PC-3 (cell line): ENCODE measurements at regions of chrX and their contacts with region 1.

Region 1: GRCh38 chrX:108070891-108071290 is 20.5 kb downstream of the PSMD10 start:
- DNase-seq: peak; percentile 91
- ATAC-seq: peak; percentile 98
- H3K4me3 ChIP-seq: no peak overlapping the region
- H3K27ac ChIP-seq: peak overlapping the region; percentile 52
- H3K4me1 ChIP-seq: peaks cover 31% of the 10 kb centered on the region
- H3K27me3 ChIP-seq: no peaks in the 10 kb centered on the region
- CTCF ChIP-seq: no peak

Region 2: GRCh38 chrX:107654872-107655761 is 415.8 kb before region 1 on chrX:
- CTCF ChIA-PET with region 1: no interaction called
- POLR2A ChIA-PET with region 1: no interaction called
- intact Hi-C with region 1: loop called (anchors 5 kb)
- DNase-seq: peak; percentile 86
- ATAC-seq: peak; percentile 84
- H3K4me3 ChIP-seq: peak overlapping the region; percentile 34
- H3K27ac ChIP-seq: peak overlapping the region; percentile 89
- H3K4me1 ChIP-seq: peaks cover 19% of the 10 kb centered on the region
- H3K27me3 ChIP-seq: no peaks in the 10 kb centered on the region
- CTCF ChIP-seq: peak; percentile 88

Region 3: GRCh38 chrX:107716816-107717700 is 353.8 kb before region 1 on chrX:
- CTCF ChIA-PET with region 1: no interaction called
- POLR2A ChIA-PET with region 1: no interaction called
- intact Hi-C with region 1: loop called (anchors 5 kb)
- DNase-seq: peak; percentile 69
- ATAC-seq: peak; percentile 64
- H3K4me3 ChIP-seq: peak overlapping the region; percentile 92
- H3K27ac ChIP-seq: peak overlapping the region; percentile 25; the same call in 1 of the 2 replicates
- H3K4me1 ChIP-seq: peaks cover 19% of the 10 kb centered on the region
- H3K27me3 ChIP-seq: no peaks in the 10 kb centered on the region
- CTCF ChIP-seq: no peak

Region 4: DNA sequence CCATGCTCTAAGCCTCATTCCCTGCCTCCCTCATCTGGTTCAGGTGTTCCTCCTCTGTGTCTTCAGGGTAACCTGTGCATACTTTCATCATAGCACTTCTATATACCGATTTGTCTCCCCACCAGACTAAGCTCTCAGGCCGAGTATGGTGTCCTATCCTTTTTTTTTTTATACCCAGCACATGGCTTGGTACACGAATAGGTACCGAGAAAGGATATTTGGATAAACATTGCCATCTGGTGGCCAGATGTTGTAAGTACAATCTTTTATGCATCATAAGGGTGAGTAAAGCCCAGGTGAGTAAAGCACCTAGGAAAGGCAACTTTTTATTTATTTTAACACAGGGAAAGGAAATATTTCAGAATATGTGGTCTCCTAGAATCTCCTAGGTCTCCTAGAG is 176.9 kb before region 1 on chrX:
- CTCF ChIA-PET with region 1: no interaction called
- POLR2A ChIA-PET with region 1: no interaction called
- intact Hi-C with region 1: loop called (anchors 5 kb)
- DNase-seq: peak; percentile 77
- ATAC-seq: peak; percentile 77
- H3K4me3 ChIP-seq: no peak overlapping the region
- H3K27ac ChIP-seq: no peak overlapping the region
- H3K4me1 ChIP-seq: no peaks in the 10 kb centered on the region
- H3K27me3 ChIP-seq: no peaks in the 10 kb centered on the region
- CTCF ChIP-seq: peak; percentile 76

Region 5: GRCh38 chrX:108020631-108021030 is 50.3 kb before region 1 on chrX:
- CTCF ChIA-PET with region 1: interaction called, 5 read pairs
- POLR2A ChIA-PET with region 1: no interaction called
- intact Hi-C with region 1: loop called (anchors 1 kb)
- DNase-seq: peak; percentile 54
- ATAC-seq: no peak
- H3K4me3 ChIP-seq: no peak overlapping the region
- H3K27ac ChIP-seq: peak overlapping the region; percentile 22; the same call in 1 of the 2 replicates
- H3K4me1 ChIP-seq: peaks cover 56% of the 10 kb centered on the region
- H3K27me3 ChIP-seq: no peaks in the 10 kb centered on the region
- CTCF ChIP-seq: peak; percentile 78

Region 6: GRCh38 chrX:108138814-108139702 is 68.2 kb after region 1 on chrX:
- CTCF ChIA-PET with region 1: no interaction called
- POLR2A ChIA-PET with region 1: no interaction called
- intact Hi-C with region 1: no loop called
- DNase-seq: peak; percentile 35
- ATAC-seq: peak; percentile 74
- H3K4me3 ChIP-seq: no peak overlapping the region
- H3K27ac ChIP-seq: no peak overlapping the region
- H3K4me1 ChIP-seq: 0 out of 2 replicates have a peak, but pooled peaks cover 3% of the 10 kb centered on the region
- H3K27me3 ChIP-seq: no peaks in the 10 kb centered on the region
- CTCF ChIP-seq: peak; percentile 65